Activated CD4-positive, alpha-beta memory T cell treated with anti-CD3 and anti-CD28 coated beads for 36 hours (primary cell): ENCODE measurements at regions of chr20 and their contacts with region 1.

Region 1: GRCh38 chr20:45044084-45044573 is 56.8 kb downstream of the KCNS1 start:
- DNase-seq: peak; percentile 41
- H3K4me3 Mint-ChIP-seq: no peak overlapping the region
- H3K27ac Mint-ChIP-seq: peak overlapping the region; percentile 75
- H3K4me1 Mint-ChIP-seq: peaks cover 74% of the 10 kb centered on the region
- H3K27me3 Mint-ChIP-seq: no peaks in the 10 kb centered on the region

Region 2: DNA sequence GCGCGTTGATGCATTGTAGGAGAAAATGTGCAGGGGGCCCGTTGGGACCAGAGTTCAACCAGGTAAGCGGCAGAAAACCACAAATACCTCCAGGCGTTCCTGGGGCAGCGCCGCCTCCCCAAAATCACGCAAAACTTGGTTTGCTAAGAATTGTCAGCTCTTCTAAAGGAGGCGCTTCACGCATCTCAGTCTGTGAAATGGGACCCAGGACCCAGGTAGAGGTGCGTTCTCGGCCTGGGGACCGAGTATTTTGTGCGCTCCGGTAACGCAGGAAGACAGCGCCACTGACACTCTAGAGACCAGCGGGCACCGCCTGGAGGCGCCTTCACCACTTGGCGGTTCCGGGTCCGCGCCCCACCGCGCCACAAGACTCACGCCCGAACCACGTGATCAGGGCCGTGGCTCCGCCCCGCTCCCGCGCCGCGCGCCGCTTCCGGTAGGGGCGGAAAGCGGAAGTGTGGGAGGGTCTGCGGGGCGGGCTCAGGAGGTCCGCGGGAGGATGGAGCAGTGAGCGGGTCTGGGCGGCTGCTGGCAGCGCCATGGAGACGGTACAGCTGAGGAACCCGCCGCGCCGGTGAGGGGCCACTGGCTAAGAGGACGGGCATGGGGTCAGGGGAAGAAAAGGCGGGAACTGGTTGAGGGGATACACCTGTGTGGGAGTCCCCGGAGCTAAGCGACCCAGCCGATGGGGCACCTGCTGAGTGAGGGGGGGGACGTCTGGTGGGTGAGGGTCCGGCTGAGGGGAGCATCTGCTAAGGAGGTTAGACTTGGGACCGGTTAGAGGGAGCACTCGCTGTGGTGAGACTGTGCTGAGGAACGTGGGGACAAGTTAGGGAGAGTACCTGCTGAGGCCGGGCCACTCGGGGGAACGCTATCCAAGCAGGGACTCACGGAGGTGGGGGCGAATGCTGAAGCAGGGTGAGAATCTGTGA is 77.8 kb before region 1 on chr20 and contains the start of gene STK4:
- CTCF ChIA-PET with region 1: interaction called, 12 read pairs
- POLR2A ChIA-PET with region 1: interaction called, 5 read pairs
- intact Hi-C with region 1: no loop called
- DNase-seq: peak; percentile 97
- H3K4me3 Mint-ChIP-seq: peak within 1 kb of the TSS; percentile 95
- H3K27ac Mint-ChIP-seq: peak within 1 kb of the TSS; percentile 99
- H3K4me1 Mint-ChIP-seq: peaks cover 58% of the 10 kb centered on the region
- H3K27me3 Mint-ChIP-seq: no peaks in the 10 kb centered on the region
- total RNA-seq, gene STK4: 126 to 128 TPM

Region 3: DNA sequence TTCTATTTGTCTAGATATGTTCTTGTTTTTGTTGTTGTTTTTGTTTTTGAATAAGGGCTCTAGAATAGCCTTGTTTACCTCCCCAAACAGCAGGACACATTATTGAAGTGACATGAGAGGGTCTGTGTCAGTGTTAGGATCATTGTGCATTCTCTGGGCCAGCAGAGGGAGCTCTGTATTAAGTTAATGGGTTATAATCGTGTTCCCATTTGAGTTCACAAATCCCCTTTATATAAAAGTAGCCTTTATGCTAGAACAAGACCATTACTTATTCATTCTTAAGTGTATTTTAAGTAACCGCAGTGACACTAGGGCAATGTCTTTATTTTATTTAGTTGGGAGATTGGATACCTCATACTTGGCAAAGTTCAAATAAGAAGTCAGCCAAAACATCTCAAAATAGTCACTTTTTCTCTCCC is 33.0 kb before region 1 on chr20:
- CTCF ChIA-PET with region 1: interaction called, 22 read pairs
- POLR2A ChIA-PET with region 1: no interaction called
- intact Hi-C with region 1: loop called (anchors 2 kb)
- DNase-seq: peak; percentile 55
- H3K4me3 Mint-ChIP-seq: no peak overlapping the region
- H3K27ac Mint-ChIP-seq: no peak overlapping the region
- H3K4me1 Mint-ChIP-seq: peaks cover 62% of the 10 kb centered on the region
- H3K27me3 Mint-ChIP-seq: no peaks in the 10 kb centered on the region

Region 4: GRCh38 chr20:45028424-45029136 is 15.5 kb before region 1 on chr20:
- CTCF ChIA-PET with region 1: interaction called, 36 read pairs
- POLR2A ChIA-PET with region 1: interaction called, 3 read pairs
- intact Hi-C with region 1: no loop called
- DNase-seq: peak; percentile 42
- H3K4me3 Mint-ChIP-seq: no peak overlapping the region
- H3K27ac Mint-ChIP-seq: peak overlapping the region; percentile 78
- H3K4me1 Mint-ChIP-seq: peaks cover 72% of the 10 kb centered on the region
- H3K27me3 Mint-ChIP-seq: no peaks in the 10 kb centered on the region

Region 5: GRCh38 chr20:45070932-45071632 is 27.0 kb after region 1 on chr20:
- CTCF ChIA-PET with region 1: interaction called, 19 read pairs
- POLR2A ChIA-PET with region 1: no interaction called
- intact Hi-C with region 1: no loop called
- DNase-seq: no peak
- H3K4me3 Mint-ChIP-seq: no peak overlapping the region
- H3K27ac Mint-ChIP-seq: no peak overlapping the region
- H3K4me1 Mint-ChIP-seq: peaks cover 60% of the 10 kb centered on the region
- H3K27me3 Mint-ChIP-seq: no peaks in the 10 kb centered on the region

Region 6: DNA sequence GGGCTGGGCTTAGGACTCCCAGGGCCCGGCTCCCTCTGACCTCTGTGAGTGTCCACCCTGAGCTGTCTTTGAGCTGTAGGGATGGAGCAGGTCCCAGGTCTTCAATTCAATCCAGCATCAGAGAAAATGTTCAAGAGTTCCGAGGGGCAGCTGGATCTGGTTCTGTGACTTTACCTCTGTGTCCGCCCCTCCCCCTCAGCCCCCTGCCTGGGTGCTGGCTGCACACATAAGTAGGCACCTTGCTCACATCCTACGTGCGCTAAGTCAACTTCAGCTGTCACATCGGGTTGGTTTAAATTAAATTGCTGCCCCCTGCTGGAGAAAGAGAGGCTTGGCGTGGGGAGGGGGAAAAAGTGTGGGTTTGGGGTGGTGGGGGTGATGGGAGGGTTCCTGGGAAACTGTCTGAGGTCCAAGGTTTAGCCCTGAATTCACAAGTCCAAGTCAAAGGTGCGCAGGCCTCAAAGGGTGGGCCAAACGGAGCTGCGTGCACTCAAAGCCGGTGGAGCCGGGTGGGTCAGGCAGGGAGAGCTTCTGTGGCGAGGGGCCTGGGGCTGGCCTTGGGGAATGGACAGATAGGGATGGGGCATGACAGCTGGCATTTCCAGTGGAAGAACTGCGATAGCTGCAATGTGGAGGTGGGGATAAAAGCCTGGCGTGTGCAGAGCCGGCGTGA is 67.8 kb after region 1 on chr20:
- CTCF ChIA-PET with region 1: interaction called, 59 read pairs
- POLR2A ChIA-PET with region 1: interaction called, 3 read pairs
- intact Hi-C with region 1: no loop called
- DNase-seq: peak; percentile 37
- H3K4me3 Mint-ChIP-seq: no peak overlapping the region
- H3K27ac Mint-ChIP-seq: no peak overlapping the region
- H3K4me1 Mint-ChIP-seq: peaks cover 9% of the 10 kb centered on the region
- H3K27me3 Mint-ChIP-seq: no peaks in the 10 kb centered on the region

Region 7: DNA sequence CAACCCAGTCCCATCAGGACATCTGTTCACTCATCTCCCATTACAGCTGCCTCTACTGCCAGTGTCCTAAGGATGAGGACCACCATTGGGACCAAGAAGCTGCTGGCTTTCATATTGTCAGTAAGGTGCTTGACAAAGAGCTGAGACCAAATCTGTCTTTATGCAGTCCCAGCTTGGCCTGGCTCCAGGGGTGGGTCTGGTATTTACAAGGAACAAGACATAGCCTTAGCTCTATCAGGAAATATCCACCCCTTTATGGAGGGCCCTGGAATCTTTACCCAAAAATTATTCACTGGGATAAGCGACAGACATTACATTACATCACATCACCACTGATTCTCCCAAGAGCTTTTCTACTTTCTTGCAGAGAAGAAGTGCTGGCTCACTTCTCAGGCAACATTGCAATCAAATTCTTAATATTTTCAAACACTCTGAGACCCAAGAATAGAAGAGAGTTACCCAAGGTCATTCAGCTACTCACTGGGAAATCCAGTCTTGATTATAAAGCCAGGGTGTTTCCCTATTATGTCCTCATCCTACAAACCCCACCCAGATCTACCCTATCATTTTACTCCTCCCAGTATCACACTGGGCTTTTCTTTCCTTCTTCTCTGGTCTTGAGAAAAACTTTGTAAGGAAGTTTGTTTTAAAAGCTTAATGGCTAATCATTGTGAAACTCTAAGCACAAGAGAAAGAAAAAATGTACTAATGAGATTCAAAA is 119.1 kb after region 1 on chr20:
- CTCF ChIA-PET with region 1: no interaction called
- POLR2A ChIA-PET with region 1: no interaction called
- intact Hi-C with region 1: no loop called
- DNase-seq: no peak
- H3K4me3 Mint-ChIP-seq: no peak overlapping the region
- H3K27ac Mint-ChIP-seq: no peak overlapping the region
- H3K4me1 Mint-ChIP-seq: no peaks in the 10 kb centered on the region
- H3K27me3 Mint-ChIP-seq: peaks cover 32% of the 10 kb centered on the region